SK-N-SH (cell line): ENCODE measurements at regions of chr17 and their contacts with region 1.

Region 1: DNA sequence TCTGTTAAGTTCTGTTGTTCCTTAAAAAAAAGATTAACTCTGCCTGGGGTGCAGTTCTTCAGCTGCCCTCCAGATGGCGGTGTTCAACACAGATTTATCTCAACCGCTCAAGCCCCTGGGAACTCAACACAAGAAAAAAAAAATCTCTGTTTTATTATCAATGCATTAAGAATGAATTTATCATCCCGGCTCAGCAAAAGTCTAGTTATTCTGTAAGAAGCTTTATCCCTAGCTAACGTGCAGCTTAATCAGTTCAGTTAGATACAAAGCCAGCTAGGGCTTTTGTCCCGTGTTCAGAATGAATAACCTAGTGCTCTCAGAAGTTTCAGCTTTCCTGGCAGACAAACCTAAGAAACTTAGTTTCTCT is 475.9 kb upstream of the CCL2 start:
- DNase-seq: peak; percentile 57
- H3K4me3 ChIP-seq: peak overlapping the region in 1 of 2 experiments; percentile 39; a peak in 1 of 4 replicates
- H3K27ac ChIP-seq: no peak overlapping the region
- H3K4me1 ChIP-seq: peaks cover 0 to 3% of the 10 kb centered on the region in 2 experiments; a peak in 1 of 4 replicates
- H3K27me3 ChIP-seq: no peaks in the 10 kb centered on the region
- CTCF ChIP-seq: peak; percentile 97
- EP300 ChIP-seq: no peak
- RAD21 ChIP-seq: peak; percentile 96

Region 2: GRCh38 chr17:33674685-33675084 is 104.5 kb before region 1 on chr17:
- CTCF ChIA-PET with region 1: no interaction called
- POLR2A ChIA-PET with region 1: no interaction called
- DNase-seq: peak; percentile 62
- H3K4me3 ChIP-seq: no peak overlapping the region; a peak in 1 of 4 replicates
- H3K27ac ChIP-seq: no peak overlapping the region
- H3K4me1 ChIP-seq: no peaks in the 10 kb centered on the region
- H3K27me3 ChIP-seq: no peaks in the 10 kb centered on the region
- CTCF ChIP-seq: peak; percentile 80
- EP300 ChIP-seq: no peak
- RAD21 ChIP-seq: peak; percentile 72

Region 3: GRCh38 chr17:33798308-33798707 is 19.1 kb after region 1 on chr17:
- CTCF ChIA-PET with region 1: interaction called, 10 read pairs
- POLR2A ChIA-PET with region 1: no interaction called
- DNase-seq: no peak
- H3K4me3 ChIP-seq: no peak overlapping the region
- H3K27ac ChIP-seq: no peak overlapping the region
- H3K4me1 ChIP-seq: no peaks in the 10 kb centered on the region
- H3K27me3 ChIP-seq: no peaks in the 10 kb centered on the region
- CTCF ChIP-seq: no peak
- EP300 ChIP-seq: no peak
- RAD21 ChIP-seq: no peak

Region 4: DNA sequence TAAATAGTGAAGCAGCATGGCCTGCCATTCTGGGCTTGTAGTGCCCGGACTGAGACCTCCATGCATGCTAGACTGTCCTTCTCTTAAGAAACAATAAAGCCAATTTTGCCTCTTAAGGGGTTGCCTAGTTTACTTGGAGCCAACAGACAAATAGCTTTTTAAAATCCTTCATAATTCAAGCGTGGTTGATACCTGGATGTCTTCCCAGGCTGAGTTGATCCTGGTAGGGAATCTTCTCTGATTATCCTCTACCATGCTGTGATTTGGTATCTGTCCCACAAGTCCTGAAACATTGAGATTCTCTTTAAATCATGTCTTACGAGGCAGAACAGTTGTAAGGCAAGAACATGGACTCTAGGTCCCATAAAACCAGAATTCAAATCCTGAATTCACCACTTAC is 116.3 kb after region 1 on chr17:
- CTCF ChIA-PET with region 1: interaction called, 14 read pairs
- POLR2A ChIA-PET with region 1: no interaction called
- DNase-seq: no peak
- H3K4me3 ChIP-seq: no peak overlapping the region
- H3K27ac ChIP-seq: no peak overlapping the region
- H3K4me1 ChIP-seq: peaks cover 0 to 12% of the 10 kb centered on the region in 2 experiments; a peak in 2 of 4 replicates
- H3K27me3 ChIP-seq: no peaks in the 10 kb centered on the region
- CTCF ChIP-seq: no peak
- EP300 ChIP-seq: no peak
- RAD21 ChIP-seq: no peak

Region 5: GRCh38 chr17:33940769-33941370 is 161.7 kb after region 1 on chr17:
- CTCF ChIA-PET with region 1: interaction called, 10 read pairs
- POLR2A ChIA-PET with region 1: no interaction called
- DNase-seq: no peak
- H3K4me3 ChIP-seq: no peak overlapping the region
- H3K27ac ChIP-seq: no peak overlapping the region
- H3K4me1 ChIP-seq: peaks cover 0 to 25% of the 10 kb centered on the region in 2 experiments; a peak in 1 of 4 replicates
- H3K27me3 ChIP-seq: no peaks in the 10 kb centered on the region
- CTCF ChIP-seq: no peak
- EP300 ChIP-seq: no peak
- RAD21 ChIP-seq: no peak

Region 6: GRCh38 chr17:34163646-34164045 is 384.4 kb after region 1 on chr17:
- CTCF ChIA-PET with region 1: interaction called, 57 read pairs
- POLR2A ChIA-PET with region 1: no interaction called
- DNase-seq: peak; percentile 60
- H3K4me3 ChIP-seq: no peak overlapping the region
- H3K27ac ChIP-seq: no peak overlapping the region
- H3K4me1 ChIP-seq: no peaks in the 10 kb centered on the region; a peak in 1 of 4 replicates
- H3K27me3 ChIP-seq: no peaks in the 10 kb centered on the region; the same call in 1 of the 2 replicates
- CTCF ChIP-seq: peak; percentile 41
- EP300 ChIP-seq: no peak
- RAD21 ChIP-seq: peak; percentile 80